Left cardiac atrium (tissue), 4 donors: ENCODE measurements at regions of chr5 and their contacts with region 1.

Region 1: GRCh38 chr5:149114403-149115312 is 26.6 kb upstream of the ABLIM3 start:
- DNase-seq: peak; percentile 69
- ATAC-seq: peak; percentile 96 to 98

Region 2: GRCh38 chr5:148179234-148179824 is 935.3 kb before region 1 on chr5:
- intact Hi-C with region 1: loop called in 1 of 2 experiments (anchors 10 kb)
- DNase-seq: no peak
- ATAC-seq: peak; percentile 47 to 65

Region 3: DNA sequence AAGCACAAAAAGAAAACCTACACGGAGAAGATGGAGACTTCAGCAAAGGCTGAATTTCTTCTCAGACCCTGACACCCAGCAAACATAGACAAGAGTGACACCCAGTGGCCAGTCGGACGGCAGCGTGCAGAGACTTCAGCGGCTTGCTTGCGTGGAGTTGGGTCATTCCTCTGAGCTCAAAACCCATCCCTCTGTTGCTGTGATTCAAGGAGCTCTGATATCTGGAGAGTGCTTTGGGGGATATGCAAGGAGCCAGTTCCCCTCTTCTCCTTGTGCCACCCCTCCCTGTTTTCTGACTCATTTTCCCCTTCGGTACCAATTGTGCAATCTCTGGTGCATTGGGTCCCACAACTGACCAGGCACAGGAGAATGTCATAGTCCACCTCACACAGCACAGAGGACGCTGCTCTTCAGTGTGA is 79.3 kb before region 1 on chr5:
- intact Hi-C with region 1: loop called (anchors 5 to 10 kb)
- DNase-seq: peak; percentile 79
- ATAC-seq: peak; percentile 93 to 94

Region 4: DNA sequence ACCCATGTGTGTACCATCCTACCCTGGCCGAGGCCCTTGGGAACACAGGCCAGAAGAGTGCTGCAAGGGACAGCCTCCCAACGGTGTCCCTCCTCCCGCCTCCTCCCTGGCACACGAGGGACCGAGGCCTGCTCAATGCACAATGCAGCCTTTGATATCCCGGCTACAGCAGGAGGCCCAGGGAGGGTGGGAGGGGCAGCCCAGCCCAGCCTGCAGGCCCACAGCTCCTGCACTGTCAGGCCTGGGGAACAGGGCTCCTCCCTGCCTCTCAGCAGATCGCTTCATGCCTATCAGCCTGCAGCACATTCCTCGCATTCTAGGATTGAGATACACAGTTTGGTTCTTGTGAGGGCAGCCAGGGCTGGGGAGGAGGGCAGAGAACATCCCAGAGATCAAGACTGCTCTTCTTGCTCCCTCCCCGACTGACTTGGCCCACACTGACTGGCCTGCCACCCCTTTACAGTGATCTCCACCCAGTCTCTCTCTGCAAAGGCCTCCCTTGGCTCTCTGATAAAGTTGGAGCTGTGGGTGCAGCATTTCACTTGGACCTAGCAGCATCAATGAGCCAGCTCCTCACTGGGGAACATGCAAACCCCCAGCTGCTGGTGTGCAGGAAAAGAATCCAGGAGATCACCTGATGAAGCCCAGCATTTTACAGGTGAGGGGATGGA is 51.5 kb before region 1 on chr5 and contains the start of gene SH3TC2:
- intact Hi-C with region 1: loop called in 1 of 2 experiments (anchors 10 kb)
- DNase-seq: peak; percentile 63
- ATAC-seq: peak; percentile 89 to 93
- total RNA-seq, gene SH3TC2: 3.1 to 20.1 TPM

Region 5: GRCh38 chr5:149240354-149240998 is 125.8 kb after region 1 on chr5:
- intact Hi-C with region 1: no loop called
- DNase-seq: no peak
- ATAC-seq: peak; percentile 16 to 45